Activated T-helper 1 cell treated with anti-CD3 and anti-CD28 coated beads, Interleukin-12 subunit alpha, Interleukin-12 subunit beta, Interleukin-2, Interleukin-4 antibody, amounts not matched to agents 30 ng/mL and 10 ng/mL and 1 ng/mL, durations not matched to agents 14 hours and 24 hours and 36 hours (primary cell): ENCODE measurements at regions of chr18 and their contacts with region 1.

Region 1: GRCh38 chr18:35040988-35041814 is at the start of gene MAPRE2:
- DNase-seq: peak; percentile 98
- H3K4me3 Mint-ChIP-seq: peak within 1 kb of the TSS; percentile 96
- H3K27ac Mint-ChIP-seq: peak within 1 kb of the TSS; percentile 99
- H3K4me1 Mint-ChIP-seq: peaks cover 57% of the 10 kb centered on the region
- H3K27me3 Mint-ChIP-seq: no peaks in the 10 kb centered on the region
- total RNA-seq, gene MAPRE2: 50.7 TPM in 2 replicates

Region 2: GRCh38 chr18:35005963-35006577 is 35.1 kb before region 1 on chr18:
- intact Hi-C with region 1: loop called (anchors 1 kb)
- DNase-seq: no peak
- H3K4me3 Mint-ChIP-seq: no peak overlapping the region
- H3K27ac Mint-ChIP-seq: no peak overlapping the region
- H3K4me1 Mint-ChIP-seq: no peaks in the 10 kb centered on the region
- H3K27me3 Mint-ChIP-seq: peaks cover 2% of the 10 kb centered on the region

Region 3: DNA sequence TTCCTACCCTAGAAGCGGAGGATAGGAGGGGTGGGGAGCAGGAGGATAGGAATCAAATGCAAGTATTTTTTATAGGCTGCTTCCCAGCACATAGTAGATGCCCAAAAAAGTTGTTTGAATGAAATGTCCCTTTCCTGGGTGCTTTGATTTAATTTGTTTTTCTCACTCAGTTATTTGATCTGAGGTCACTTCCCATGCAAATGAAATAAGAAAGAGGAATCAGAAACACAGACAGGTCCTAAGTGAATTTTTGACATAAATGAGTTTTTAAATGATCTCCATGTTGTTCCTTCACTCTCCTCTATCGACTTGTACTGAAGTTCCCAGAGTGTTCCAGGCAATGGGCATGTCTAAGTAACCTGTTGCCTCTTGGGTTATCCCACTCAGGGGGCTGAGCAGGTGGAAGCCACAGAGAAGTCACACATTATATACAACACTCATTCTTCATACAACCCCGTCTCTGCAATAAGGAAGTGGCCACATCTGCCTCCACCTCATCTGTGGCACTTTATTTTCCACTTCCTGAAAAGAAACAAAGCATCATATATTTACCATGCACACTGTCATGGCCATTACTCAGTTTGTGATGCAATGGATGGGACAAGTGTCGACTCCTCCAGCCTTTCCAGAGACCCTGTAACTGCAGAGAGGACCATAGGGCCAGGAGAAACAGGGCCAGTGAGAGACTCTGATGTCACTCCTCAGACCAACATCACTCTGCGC is 117.7 kb after region 1 on chr18:
- intact Hi-C with region 1: loop called (anchors 1 kb)
- DNase-seq: peak; percentile 17
- H3K4me3 Mint-ChIP-seq: no peak overlapping the region
- H3K27ac Mint-ChIP-seq: peak overlapping the region; percentile 89
- H3K4me1 Mint-ChIP-seq: peaks cover 29% of the 10 kb centered on the region
- H3K27me3 Mint-ChIP-seq: no peaks in the 10 kb centered on the region

Region 4: GRCh38 chr18:35580701-35581539 is 539.7 kb after region 1 on chr18:
- intact Hi-C with region 1: loop called (anchors 5 kb)
- DNase-seq: peak; percentile 44
- H3K4me3 Mint-ChIP-seq: peak overlapping the region; percentile 76
- H3K27ac Mint-ChIP-seq: no peak overlapping the region
- H3K4me1 Mint-ChIP-seq: peaks cover 33% of the 10 kb centered on the region
- H3K27me3 Mint-ChIP-seq: peaks cover 3% of the 10 kb centered on the region

Region 5: GRCh38 chr18:35972197-35973052 is 931.2 kb after region 1 on chr18 and contains the start of gene RMP24:
- intact Hi-C with region 1: loop called (anchors 10 kb)
- DNase-seq: peak; percentile 90
- H3K4me3 Mint-ChIP-seq: peak within 1 kb of the TSS; percentile 98
- H3K27ac Mint-ChIP-seq: peak within 1 kb of the TSS; percentile 98
- H3K4me1 Mint-ChIP-seq: peaks cover 53% of the 10 kb centered on the region
- H3K27me3 Mint-ChIP-seq: no peaks in the 10 kb centered on the region